Stomach (tissue), 19 donors: ENCODE measurements at regions of chr1 and their contacts with region 1.

Region 1: GRCh38 chr1:40143891-40144575 is 17.2 kb upstream of the RLF start:
- DNase-seq: peak; percentile 54 to 88
- H3K4me3 ChIP-seq: no peak overlapping the region
- H3K27ac ChIP-seq: no peak overlapping the region
- H3K4me1 ChIP-seq: peaks cover 0 to 6% (median 2%) of the 10 kb centered on the region in 4 donors
- H3K27me3 ChIP-seq: peaks cover 0 to 23% (median 0%) of the 10 kb centered on the region in 3 donors
- CTCF ChIP-seq: peak in 5 of 7 experiments; percentile 62 to 74 (median 72)
- EP300 ChIP-seq: no peak
- POLR2A ChIP-seq: no peak

Region 2: GRCh38 chr1:40338745-40339424 is 194.9 kb after region 1 on chr1:
- intact Hi-C with region 1: loop called (anchors 10 kb)
- DNase-seq: peak; percentile 89 to 94
- H3K4me3 ChIP-seq: peak overlapping the region in 3 of 4 donors; percentile 7 to 17 (median 17)
- H3K27ac ChIP-seq: peak overlapping the region in 4 of 5 donors; percentile 15 to 73 (median 42)
- H3K4me1 ChIP-seq: peaks cover 0 to 16% (median 7%) of the 10 kb centered on the region in 4 donors
- H3K27me3 ChIP-seq: no peaks in the 10 kb centered on the region
- CTCF ChIP-seq: peak in 5 of 7 experiments; percentile 87 to 99 (median 97)
- EP300 ChIP-seq: no peak
- POLR2A ChIP-seq: no peak

Region 3: GRCh38 chr1:40404670-40405462 is 260.8 kb after region 1 on chr1:
- intact Hi-C with region 1: loop called (anchors 10 kb)
- DNase-seq: peak in 1 of 2 donors; percentile 84
- H3K4me3 ChIP-seq: no peak overlapping the region
- H3K27ac ChIP-seq: peak overlapping the region in 2 of 5 donors; percentile 47 to 99
- H3K4me1 ChIP-seq: peaks cover 0 to 54% (median 26%) of the 10 kb centered on the region in 4 donors
- H3K27me3 ChIP-seq: no peaks in the 10 kb centered on the region
- CTCF ChIP-seq: peak in 5 of 7 experiments; percentile 56 to 90 (median 82)
- EP300 ChIP-seq: no peak
- POLR2A ChIP-seq: no peak